Naive thymus-derived CD4-positive, alpha-beta T cell (primary cell): ENCODE measurements at regions of chr1 and their contacts with region 1.

Region 1: GRCh38 chr1:11661103-11661502 is 2.9 kb upstream of the FBXO6 start:
- DNase-seq: no peak
- ATAC-seq: no peak
- H3K4me3 ChIP-seq: no peak overlapping the region
- H3K4me3 Mint-ChIP-seq: no peak overlapping the region
- H3K27ac ChIP-seq: no peak overlapping the region
- H3K27ac Mint-ChIP-seq: peak overlapping the region in 1 of 9 donors; percentile 75
- H3K4me1 ChIP-seq: peaks cover 0 to 5% of the 10 kb centered on the region in 2 donors
- H3K4me1 Mint-ChIP-seq: peaks cover 0 to 12% (median 6%) of the 10 kb centered on the region in 7 donors
- H3K27me3 ChIP-seq: no peaks in the 10 kb centered on the region
- H3K27me3 Mint-ChIP-seq: no peaks in the 10 kb centered on the region

Region 2: DNA sequence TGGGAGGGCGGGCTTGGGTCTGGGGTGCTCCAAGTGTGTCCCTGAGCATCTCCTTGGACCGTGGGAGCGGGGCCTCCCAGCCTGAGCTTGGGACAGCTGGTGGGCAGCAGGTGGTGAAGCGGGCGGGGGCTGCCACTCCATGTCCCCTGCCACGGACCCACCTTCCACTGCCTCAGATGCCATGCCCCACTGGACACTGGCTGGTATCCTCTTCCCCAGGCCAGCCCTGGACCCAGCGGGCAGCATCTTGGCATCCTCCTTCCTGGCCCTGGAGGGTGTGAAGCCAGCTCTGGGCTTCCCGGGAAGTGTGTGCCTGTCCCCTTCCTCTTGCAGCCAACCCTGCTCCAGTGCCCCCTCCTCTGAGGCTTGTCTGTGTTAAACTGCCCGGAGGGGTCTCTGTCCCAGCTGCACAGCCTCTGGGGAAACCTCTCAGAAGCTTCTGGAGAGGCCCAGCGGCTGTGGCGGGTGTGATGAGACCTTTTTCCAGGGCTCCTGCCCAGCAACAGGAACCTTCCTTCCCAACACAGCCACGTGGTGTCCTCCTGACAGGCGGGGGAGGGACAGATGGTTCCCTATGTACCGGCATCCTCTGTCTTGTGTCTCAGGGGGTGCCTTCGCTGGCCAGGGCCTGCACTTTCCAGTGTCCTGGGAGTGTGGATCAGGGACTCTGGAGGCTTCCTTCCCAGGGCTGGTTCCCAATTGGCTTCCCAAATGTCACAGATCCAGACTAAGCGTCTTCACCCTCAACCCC is 263.8 kb before region 1 on chr1:
- CTCF ChIA-PET with region 1: no interaction called
- POLR2A ChIA-PET with region 1: no interaction called
- intact Hi-C with region 1: no loop called
- DNase-seq: no peak
- ATAC-seq: no peak
- H3K4me3 ChIP-seq: no peak overlapping the region
- H3K4me3 Mint-ChIP-seq: no peak overlapping the region
- H3K27ac ChIP-seq: no peak overlapping the region
- H3K27ac Mint-ChIP-seq: no peak overlapping the region
- H3K4me1 ChIP-seq: no peaks in the 10 kb centered on the region
- H3K4me1 Mint-ChIP-seq: peaks cover 0 to 11% (median 4%) of the 10 kb centered on the region in 7 donors
- H3K27me3 ChIP-seq: no peaks in the 10 kb centered on the region
- H3K27me3 Mint-ChIP-seq: peaks cover 0 to 12% (median 0%) of the 10 kb centered on the region in 5 donors

Region 3: DNA sequence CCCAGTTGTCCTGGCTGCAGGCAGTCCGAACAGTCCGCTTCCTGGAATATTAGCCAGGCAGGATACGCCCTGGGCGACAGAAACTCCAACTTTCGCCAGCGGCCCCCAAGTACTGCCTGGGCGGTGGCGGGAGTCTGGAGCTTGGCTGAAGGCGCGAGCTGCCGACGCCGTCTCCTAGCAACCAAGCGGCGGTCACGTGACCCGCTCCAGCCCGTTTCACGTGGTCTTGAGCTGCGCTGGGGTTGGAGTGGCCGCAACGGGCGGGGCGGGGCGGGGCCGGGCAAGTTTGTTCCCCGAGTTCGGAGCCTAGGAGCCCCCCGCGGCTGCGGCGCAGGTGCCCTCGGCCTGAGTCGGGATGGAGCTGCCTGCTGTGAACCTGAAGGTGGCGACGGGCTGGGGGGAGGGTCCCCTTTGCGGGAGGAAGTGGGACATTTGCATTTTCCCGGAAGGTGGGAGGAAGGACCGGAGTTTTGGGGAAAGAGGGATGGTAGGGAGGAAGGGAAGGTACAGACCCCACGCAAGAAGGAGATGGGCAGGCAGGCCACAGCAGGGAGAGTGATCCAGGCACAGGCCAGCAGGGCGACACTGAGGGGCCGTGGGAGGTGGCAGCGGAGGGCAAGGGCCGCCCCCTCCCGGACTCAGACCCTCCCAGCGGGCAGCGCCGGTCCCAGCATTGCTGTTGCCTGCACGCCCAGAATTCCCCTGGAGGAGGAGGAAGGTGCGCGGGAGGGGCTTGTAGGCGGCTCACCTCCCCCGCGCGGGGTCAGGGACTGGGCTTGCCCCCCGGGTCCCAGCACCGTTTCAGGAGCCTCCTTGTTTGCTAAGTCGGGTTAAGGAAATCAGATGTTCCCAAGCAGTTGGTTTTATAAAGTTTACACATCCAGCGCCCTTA is 75.0 kb after region 1 on chr1 and contains the start of gene AGTRAP:
- CTCF ChIA-PET with region 1: interaction called, 4 read pairs
- POLR2A ChIA-PET with region 1: no interaction called
- intact Hi-C with region 1: loop called in 1 of 2 experiments (anchors 5 kb)
- DNase-seq: peak; percentile 62 to 84 (median 71)
- ATAC-seq: peak; percentile 78
- H3K4me3 ChIP-seq: peak within 1 kb of the TSS; percentile 92
- H3K4me3 Mint-ChIP-seq: peak within 1 kb of the TSS; percentile 84 to 96 (median 92)
- H3K27ac ChIP-seq: peak within 1 kb of the TSS; percentile 79
- H3K27ac Mint-ChIP-seq: peak within 1 kb of the TSS; percentile 3 to 95 (median 83)
- H3K4me1 ChIP-seq: peaks cover 38 to 52% of the 10 kb centered on the region in 2 donors
- H3K4me1 Mint-ChIP-seq: peaks cover 51 to 80% (median 76%) of the 10 kb centered on the region in 7 donors
- H3K27me3 ChIP-seq: no peaks in the 10 kb centered on the region
- H3K27me3 Mint-ChIP-seq: no peaks in the 10 kb centered on the region
- total RNA-seq, gene AGTRAP: 28.2 to 82.5 (median 32.7) TPM

Region 4: GRCh38 chr1:11749203-11749689 is 88.1 kb after region 1 on chr1:
- CTCF ChIA-PET with region 1: interaction called, 14 read pairs
- POLR2A ChIA-PET with region 1: no interaction called
- intact Hi-C with region 1: loop called in 1 of 2 experiments (anchors 1 kb)
- DNase-seq: peak in 6 of 9 donors; percentile 43 to 67 (median 57)
- ATAC-seq: peak; percentile 76
- H3K4me3 ChIP-seq: no peak overlapping the region
- H3K4me3 Mint-ChIP-seq: peak overlapping the region in 3 of 10 donors; percentile 26 to 58 (median 41)
- H3K27ac ChIP-seq: peak overlapping the region; percentile 14
- H3K27ac Mint-ChIP-seq: peak overlapping the region in 7 of 9 donors; percentile 35 to 78 (median 59)
- H3K4me1 ChIP-seq: peaks cover 0 to 6% of the 10 kb centered on the region in 2 donors
- H3K4me1 Mint-ChIP-seq: peaks cover 13 to 39% (median 20%) of the 10 kb centered on the region in 7 donors
- H3K27me3 ChIP-seq: no peaks in the 10 kb centered on the region
- H3K27me3 Mint-ChIP-seq: no peaks in the 10 kb centered on the region